CD14-positive monocyte (primary cell): ENCODE measurements at regions of chr10 and their contacts with region 1.

Region 1: DNA sequence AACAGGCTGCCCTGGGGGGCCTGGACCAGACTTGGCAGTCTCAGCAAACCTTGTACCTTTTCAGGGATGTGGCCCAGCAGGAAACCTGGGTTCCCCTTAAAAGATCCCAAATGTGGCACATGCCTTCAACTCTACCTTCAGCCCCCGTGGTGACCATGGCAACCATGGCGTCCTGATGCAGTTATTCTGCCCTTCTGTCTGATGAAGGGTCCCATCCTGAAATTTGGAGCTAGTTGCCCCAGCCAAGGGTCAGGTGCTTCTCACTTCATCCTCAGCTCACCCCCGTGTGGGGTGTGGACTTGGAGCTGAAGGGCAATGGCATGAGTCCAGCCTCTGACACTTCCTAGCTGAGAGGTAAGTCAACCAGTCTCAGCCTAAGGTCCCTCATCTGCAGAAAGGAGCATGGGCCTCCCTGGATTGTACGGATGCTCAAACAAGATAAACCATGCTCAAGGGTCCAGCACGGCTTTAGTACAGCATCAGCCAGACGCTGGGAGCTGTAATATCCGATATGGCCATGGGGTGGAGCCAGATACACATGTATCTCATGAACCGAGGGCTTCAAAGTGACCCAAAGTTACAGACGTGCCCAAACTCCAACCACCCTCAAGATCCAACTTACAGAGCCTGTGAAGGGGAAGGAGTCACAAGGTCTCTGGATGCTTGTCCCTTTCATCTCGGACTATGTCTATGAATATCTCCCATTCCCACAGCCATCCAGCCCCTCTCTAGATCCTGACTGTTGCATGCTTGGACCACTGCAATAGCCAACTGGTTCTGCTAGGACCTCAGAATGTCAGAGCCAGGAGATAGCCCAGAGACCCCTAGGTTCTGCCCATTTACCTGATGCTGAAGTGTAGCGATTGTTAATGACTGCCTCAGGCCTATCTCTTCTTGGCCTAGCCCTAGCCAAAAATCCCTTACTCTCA is 142.5 kb downstream of the SH3PXD2A start:
- DNase-seq: peak; percentile 46 to 69 (median 66)
- H3K4me3 ChIP-seq: no peak overlapping the region
- H3K4me3 Mint-ChIP-seq: no peak overlapping the region
- H3K27ac ChIP-seq: no peak overlapping the region
- H3K27ac Mint-ChIP-seq: no peak overlapping the region
- H3K4me1 ChIP-seq: no peaks in the 10 kb centered on the region
- H3K4me1 Mint-ChIP-seq: no peaks in the 10 kb centered on the region
- H3K27me3 ChIP-seq: no peaks in the 10 kb centered on the region
- H3K27me3 Mint-ChIP-seq: peaks cover 3 to 8% (median 5%) of the 10 kb centered on the region in 3 donors
- CTCF ChIP-seq: peak; percentile 95

Region 2: GRCh38 chr10:103637927-103638557 is 74.8 kb before region 1 on chr10:
- intact Hi-C with region 1: no loop called
- DNase-seq: no peak
- H3K4me3 ChIP-seq: no peak overlapping the region
- H3K4me3 Mint-ChIP-seq: no peak overlapping the region
- H3K27ac ChIP-seq: no peak overlapping the region
- H3K27ac Mint-ChIP-seq: no peak overlapping the region
- H3K4me1 ChIP-seq: no peaks in the 10 kb centered on the region
- H3K4me1 Mint-ChIP-seq: no peaks in the 10 kb centered on the region
- H3K27me3 ChIP-seq: no peaks in the 10 kb centered on the region
- H3K27me3 Mint-ChIP-seq: peaks cover 0 to 3% (median 2%) of the 10 kb centered on the region in 3 donors
- CTCF ChIP-seq: no peak

Region 3: GRCh38 chr10:103781329-103782061 is 68.7 kb after region 1 on chr10:
- intact Hi-C with region 1: no loop called
- DNase-seq: no peak
- H3K4me3 ChIP-seq: no peak overlapping the region
- H3K4me3 Mint-ChIP-seq: no peak overlapping the region
- H3K27ac ChIP-seq: no peak overlapping the region
- H3K27ac Mint-ChIP-seq: no peak overlapping the region
- H3K4me1 ChIP-seq: peaks cover 0 to 6% of the 10 kb centered on the region in 2 donors
- H3K4me1 Mint-ChIP-seq: peaks cover 12% of the 10 kb centered on the region
- H3K27me3 ChIP-seq: peaks cover 0 to 2% of the 10 kb centered on the region in 2 donors
- H3K27me3 Mint-ChIP-seq: peaks cover 15 to 25% (median 22%) of the 10 kb centered on the region in 3 donors
- CTCF ChIP-seq: no peak

Region 4: DNA sequence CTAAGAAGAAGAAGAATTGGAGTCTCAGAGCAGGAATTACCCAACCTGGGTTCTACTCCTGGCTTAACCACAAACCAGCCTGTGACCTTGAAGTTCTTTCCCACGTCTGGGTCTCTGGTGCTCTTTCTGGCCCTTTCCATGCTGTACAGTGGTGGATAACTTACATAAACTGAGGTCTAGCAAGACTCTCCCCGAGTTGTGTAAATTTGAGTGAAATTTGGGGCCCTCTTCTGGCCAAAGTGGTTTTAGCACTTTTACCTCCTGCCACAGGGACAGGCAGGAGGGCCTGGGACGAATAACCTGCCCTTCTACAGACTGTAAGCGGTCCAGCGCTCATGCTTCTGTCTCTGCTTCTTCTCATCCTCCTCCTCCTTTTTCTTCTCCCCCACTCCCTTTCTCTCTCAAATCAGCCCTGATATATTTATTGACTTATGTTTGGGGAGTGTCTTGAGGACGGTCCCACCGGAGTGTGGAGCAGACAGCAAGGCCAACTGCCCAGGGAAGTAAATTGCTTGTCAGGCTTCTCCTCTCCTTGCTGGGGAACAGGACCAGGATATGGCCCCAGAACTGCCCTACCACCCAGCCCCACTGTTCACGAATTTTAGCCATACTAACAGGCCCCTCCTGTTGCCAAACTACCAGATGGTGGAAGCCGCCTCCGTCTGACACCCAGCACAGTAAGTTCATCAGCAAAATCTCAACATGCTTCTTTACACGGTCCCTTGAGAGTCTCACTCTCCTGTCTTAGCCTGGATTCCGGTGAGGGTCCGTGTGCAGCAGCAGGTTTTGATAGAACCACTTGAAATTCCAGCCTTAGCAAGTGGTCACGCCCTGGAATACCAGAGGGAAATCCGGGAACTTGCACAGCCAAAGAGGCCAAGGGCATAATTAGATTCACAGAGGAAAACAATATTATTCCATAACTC is 146.6 kb after region 1 on chr10:
- intact Hi-C with region 1: loop called (anchors 2 kb)
- DNase-seq: peak; percentile 10 to 37 (median 10)
- H3K4me3 ChIP-seq: no peak overlapping the region
- H3K4me3 Mint-ChIP-seq: no peak overlapping the region
- H3K27ac ChIP-seq: no peak overlapping the region
- H3K27ac Mint-ChIP-seq: no peak overlapping the region
- H3K4me1 ChIP-seq: peaks cover 19% of the 10 kb centered on the region in 2 donors
- H3K4me1 Mint-ChIP-seq: peaks cover 11% of the 10 kb centered on the region
- H3K27me3 ChIP-seq: peaks cover 14 to 18% of the 10 kb centered on the region in 2 donors
- H3K27me3 Mint-ChIP-seq: peaks cover 17 to 30% (median 25%) of the 10 kb centered on the region in 3 donors
- CTCF ChIP-seq: peak; percentile 73

Region 5: GRCh38 chr10:103888113-103888841 is 175.4 kb after region 1 on chr10:
- intact Hi-C with region 1: loop called in 1 of 2 experiments (anchors 2 kb)
- DNase-seq: peak; percentile 47 to 66 (median 58)
- H3K4me3 ChIP-seq: no peak overlapping the region
- H3K4me3 Mint-ChIP-seq: no peak overlapping the region
- H3K27ac ChIP-seq: no peak overlapping the region
- H3K27ac Mint-ChIP-seq: peak overlapping the region in 3 of 7 donors; percentile 20 to 54 (median 45)
- H3K4me1 ChIP-seq: peaks cover 7 to 18% of the 10 kb centered on the region in 2 donors
- H3K4me1 Mint-ChIP-seq: peaks cover 21% of the 10 kb centered on the region
- H3K27me3 ChIP-seq: no peaks in the 10 kb centered on the region
- H3K27me3 Mint-ChIP-seq: peaks cover 0 to 2% (median 0%) of the 10 kb centered on the region in 3 donors
- CTCF ChIP-seq: peak; percentile 83